Heart right ventricle (tissue), 16 donors: ENCODE measurements at regions of chr4 and their contacts with region 1.

Region 1: DNA sequence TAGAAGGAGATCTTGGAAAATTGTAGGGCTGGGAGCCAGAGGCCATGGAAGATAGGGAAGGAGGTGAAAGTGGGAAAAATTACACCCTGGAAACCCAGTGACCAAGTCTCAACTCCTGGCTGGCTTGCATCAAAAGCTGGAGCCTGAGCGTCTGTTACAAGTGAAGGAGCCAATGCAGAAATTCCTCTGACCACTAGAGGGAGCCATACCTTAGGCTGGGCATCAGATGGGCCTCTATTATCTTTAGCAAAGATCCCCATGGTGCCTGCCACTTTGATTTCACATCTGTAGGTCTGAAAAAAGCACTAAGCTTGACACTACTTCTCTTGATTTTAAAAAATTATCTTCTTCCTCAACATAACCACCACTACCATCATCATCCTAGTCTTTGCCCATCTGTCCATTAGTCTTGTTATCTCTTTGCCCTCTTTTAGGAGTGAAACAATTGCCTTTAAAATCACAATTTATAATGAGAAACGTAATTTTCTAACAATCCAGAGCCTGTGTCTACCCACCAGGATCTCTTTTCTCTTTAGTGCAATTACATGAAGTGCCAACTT is 62.9 kb downstream of the ANAPC4 start:
- DNase-seq: peak in 1 of 2 donors; percentile 61
- ATAC-seq: peak in 7 of 8 donors; percentile 27 to 74 (median 61)
- H3K4me3 ChIP-seq: no peak overlapping the region
- H3K27ac ChIP-seq: peak overlapping the region in 1 of 10 donors; percentile 39
- H3K4me1 ChIP-seq: peaks cover 0 to 16% (median 10%) of the 10 kb centered on the region in 9 donors
- H3K27me3 ChIP-seq: no peaks in the 10 kb centered on the region
- CTCF ChIP-seq: peak; percentile 71 to 94 (median 84)

Region 2: GRCh38 chr4:25383647-25384046 is 56.4 kb before region 1 on chr4:
- intact Hi-C with region 1: no loop called
- DNase-seq: no peak
- ATAC-seq: no peak
- H3K4me3 ChIP-seq: no peak overlapping the region
- H3K27ac ChIP-seq: no peak overlapping the region
- H3K4me1 ChIP-seq: peaks cover 0 to 13% (median 4%) of the 10 kb centered on the region in 9 donors
- H3K27me3 ChIP-seq: no peaks in the 10 kb centered on the region
- CTCF ChIP-seq: no peak

Region 3: DNA sequence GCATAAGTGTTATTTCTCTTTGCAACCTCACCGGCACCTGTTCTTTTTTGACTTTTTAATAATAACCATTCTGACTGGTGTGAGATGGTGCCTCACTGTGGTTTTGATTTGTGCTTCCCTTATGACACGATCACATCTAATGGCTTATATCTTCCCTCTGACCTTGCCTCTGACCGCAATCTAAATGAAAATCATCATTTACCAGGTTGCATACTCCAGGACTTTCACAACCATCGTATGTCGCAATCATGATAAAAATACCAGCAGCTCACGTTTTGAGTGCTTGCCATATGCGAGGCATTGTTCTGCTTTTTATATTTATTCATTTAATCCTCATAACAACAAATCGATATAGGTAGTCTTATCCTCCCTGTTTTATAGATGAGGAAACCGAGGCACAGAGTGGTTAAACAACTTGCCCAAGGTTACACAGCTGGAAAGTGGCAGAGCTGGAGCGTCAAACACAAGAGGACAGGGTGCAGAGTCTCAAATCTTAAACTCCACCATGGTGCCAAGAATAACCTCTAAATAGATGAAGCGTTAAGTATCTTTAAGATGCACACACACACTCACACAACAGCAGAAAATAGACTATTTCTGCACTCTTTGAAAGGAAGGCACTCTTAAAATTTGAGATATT is 320.6 kb after region 1 on chr4:
- intact Hi-C with region 1: loop called in 3 of 10 experiments (anchors 2 to 5 kb)
- DNase-seq: no peak
- ATAC-seq: no peak
- H3K4me3 ChIP-seq: no peak overlapping the region
- H3K27ac ChIP-seq: no peak overlapping the region
- H3K4me1 ChIP-seq: no peaks in the 10 kb centered on the region
- H3K27me3 ChIP-seq: no peaks in the 10 kb centered on the region
- CTCF ChIP-seq: no peak

Region 4: DNA sequence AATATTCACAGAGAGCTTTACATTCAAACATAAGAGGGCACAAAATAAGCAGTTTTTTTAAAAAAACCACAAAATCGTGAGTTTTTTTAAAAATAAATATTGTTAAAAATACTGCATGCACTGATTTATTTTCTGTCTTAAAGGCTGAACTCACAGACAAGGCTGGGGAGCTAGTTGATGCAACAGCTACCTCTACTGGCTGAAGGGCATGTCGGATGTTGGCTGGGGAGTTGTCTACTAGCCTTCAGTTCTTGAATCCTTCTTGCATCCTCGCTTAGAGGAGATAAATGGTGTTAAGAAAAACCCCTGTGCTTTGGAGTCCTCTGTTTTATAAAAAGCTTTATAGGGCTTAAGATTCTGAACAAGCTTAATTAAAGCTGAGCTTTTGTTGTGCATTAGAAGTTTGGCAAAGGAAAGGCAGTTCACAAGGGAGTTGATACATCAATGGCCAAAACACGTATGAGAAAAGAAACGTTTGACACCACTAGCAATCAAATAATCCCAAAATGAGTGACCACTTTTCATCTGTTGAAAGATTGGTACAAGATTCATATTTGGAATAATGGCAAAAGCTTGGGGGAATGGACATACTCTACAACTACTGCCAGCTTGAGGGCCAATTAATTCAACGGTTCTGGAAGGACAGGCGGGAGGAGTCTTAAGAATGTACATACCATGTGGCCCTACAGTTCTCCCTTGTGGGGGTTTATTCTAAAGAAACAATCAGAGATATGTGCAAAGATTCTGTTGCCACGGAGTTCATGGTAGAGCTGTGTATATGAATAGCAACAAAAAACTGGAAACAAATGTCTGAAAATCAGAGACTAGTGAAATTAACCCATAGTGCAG is 328.1 kb after region 1 on chr4:
- intact Hi-C with region 1: loop called (anchors 1 to 5 kb)
- DNase-seq: peak; percentile 22 to 73
- ATAC-seq: peak in 7 of 8 donors; percentile 72 to 89 (median 88)
- H3K4me3 ChIP-seq: no peak overlapping the region
- H3K27ac ChIP-seq: no peak overlapping the region
- H3K4me1 ChIP-seq: peaks cover 0 to 16% (median 0%) of the 10 kb centered on the region in 9 donors
- H3K27me3 ChIP-seq: no peaks in the 10 kb centered on the region
- CTCF ChIP-seq: peak; percentile 54 to 87 (median 81)